ENCODE measurements at regions of chr4 and their contacts with region 1.

Region 1: DNA sequence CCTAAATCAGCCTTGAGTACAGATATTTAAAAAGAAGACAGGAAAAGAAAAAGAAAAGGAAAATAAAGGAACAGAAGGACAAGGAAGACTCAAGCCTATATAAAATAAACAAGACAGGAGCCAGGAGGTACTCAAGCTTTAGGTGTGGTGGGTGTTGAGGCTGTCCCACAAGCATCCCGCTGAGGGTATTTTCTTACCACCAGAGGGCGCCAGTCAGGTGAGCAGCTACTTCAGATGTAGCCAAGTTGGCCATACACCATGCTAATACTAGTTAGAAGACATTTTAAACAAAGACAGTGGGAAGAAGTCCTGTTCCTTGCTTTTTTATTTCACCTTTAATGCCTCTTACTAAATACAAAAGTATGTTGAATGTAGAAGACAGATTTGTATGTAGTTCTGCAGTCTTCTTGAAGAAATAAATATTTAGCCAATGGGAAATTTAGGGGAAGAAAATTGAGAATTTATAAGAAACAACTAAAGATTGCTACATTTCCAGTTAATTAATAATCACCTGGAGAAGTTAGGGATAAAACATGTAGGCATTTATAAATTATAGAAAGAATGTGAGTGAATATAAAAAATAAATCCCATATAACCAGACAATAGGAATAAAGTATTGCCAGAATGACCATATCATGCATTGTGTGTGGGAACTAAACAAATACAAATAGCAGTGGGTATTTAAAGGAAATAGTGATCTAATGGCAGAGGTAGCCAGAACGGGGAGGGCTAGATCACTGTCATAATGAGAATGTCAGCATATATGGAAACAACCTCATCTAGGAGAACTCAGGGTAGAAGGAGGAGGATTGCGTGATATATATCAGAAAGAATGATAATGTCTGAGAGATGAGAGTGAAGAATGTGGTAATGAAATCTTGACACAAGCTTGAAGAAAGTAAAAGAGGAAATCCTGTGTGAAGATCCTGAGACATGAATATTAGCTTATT is 71.0 kb downstream of the MTHFD2L start:
- DNase-seq: peak; percentile 84
- ATAC-seq: peak; percentile 89
- H3K4me3 Mint-ChIP-seq: no peak overlapping the region
- H3K27ac Mint-ChIP-seq: no peak overlapping the region
- H3K4me1 Mint-ChIP-seq: peaks cover 16% of the 10 kb centered on the region
- H3K27me3 Mint-ChIP-seq: no peaks in the 10 kb centered on the region

Region 2: DNA sequence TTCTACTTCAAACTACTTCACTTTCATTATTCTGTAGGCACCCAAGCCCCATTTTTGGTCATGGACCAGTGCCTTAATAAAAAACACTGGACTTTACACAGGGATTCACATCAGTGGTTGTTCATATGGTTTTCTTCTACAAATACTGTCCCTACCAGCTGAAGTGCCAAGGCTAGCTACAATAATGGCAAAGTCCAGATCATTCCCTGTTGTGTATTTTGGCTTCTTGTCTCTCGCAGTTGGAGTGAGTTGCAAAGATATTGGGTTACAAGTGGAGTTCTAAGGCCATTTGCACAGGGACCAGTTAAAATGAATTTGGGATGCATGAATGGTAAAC is 953.7 kb before region 1 on chr4:
- CTCF ChIA-PET with region 1: no interaction called
- DNase-seq: no peak
- ATAC-seq: no peak
- H3K4me3 Mint-ChIP-seq: no peak overlapping the region
- H3K27ac Mint-ChIP-seq: no peak overlapping the region
- H3K4me1 Mint-ChIP-seq: no peaks in the 10 kb centered on the region
- H3K27me3 Mint-ChIP-seq: no peaks in the 10 kb centered on the region

Region 3: DNA sequence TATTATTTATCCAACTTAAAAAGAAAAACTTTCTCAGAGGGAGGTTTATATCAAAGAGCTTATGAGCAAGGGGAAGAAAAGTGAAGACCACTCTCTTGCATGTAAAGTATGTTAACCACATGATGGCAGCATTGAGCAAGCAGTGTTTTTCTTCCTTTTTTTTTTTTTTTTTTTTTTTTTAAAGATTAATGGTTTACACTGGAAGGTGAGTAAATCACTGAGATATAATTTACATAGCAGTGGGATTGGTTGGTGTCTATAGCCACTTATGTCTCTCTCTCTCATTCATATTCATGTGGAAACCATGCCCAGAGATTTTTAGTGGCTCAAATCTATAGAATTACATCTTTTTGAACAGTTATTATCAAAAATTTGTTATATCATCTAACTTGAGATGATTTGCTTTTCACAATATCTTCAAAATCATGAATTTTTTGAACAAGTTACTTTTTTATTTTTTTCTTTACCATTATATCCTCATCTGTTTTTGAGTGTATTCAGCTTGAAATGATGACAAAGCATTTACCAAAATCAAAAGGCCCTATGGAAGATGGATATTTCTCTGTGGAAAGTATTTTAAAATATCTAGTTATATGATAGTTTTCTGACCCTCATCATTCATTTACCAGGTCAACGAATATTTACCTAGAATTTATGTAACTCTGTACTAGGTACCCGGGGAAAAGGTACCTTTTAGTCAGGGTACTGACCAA is 39.5 kb before region 1 on chr4:
- CTCF ChIA-PET with region 1: interaction called, 19 read pairs
- DNase-seq: no peak
- ATAC-seq: peak; percentile 20
- H3K4me3 Mint-ChIP-seq: no peak overlapping the region
- H3K27ac Mint-ChIP-seq: no peak overlapping the region
- H3K4me1 Mint-ChIP-seq: no peaks in the 10 kb centered on the region
- H3K27me3 Mint-ChIP-seq: no peaks in the 10 kb centered on the region

Measured in activated CD8-positive, alpha-beta memory T cell treated with anti-CD3 and anti-CD28 coated beads, Interleukin-2, amount 10 ng/mL, durations not matched to agents 7 days and 5 days (primary cell).